Heart left ventricle (tissue), 16 donors: ENCODE measurements at regions of chr7 and their contacts with region 1.

Region 1: GRCh38 chr7:144854839-144855424 is 19.1 kb upstream of the TPK1 start:
- DNase-seq: no peak
- ATAC-seq: no peak
- H3K4me3 ChIP-seq: no peak overlapping the region
- H3K27ac ChIP-seq: no peak overlapping the region
- H3K4me1 ChIP-seq: no peaks in the 10 kb centered on the region
- H3K27me3 ChIP-seq: peaks cover 0 to 10% (median 0%) of the 10 kb centered on the region in 9 donors
- CTCF ChIP-seq: peak; percentile 37 to 67 (median 48)
- POLR2A ChIP-seq: no peak

Region 2: DNA sequence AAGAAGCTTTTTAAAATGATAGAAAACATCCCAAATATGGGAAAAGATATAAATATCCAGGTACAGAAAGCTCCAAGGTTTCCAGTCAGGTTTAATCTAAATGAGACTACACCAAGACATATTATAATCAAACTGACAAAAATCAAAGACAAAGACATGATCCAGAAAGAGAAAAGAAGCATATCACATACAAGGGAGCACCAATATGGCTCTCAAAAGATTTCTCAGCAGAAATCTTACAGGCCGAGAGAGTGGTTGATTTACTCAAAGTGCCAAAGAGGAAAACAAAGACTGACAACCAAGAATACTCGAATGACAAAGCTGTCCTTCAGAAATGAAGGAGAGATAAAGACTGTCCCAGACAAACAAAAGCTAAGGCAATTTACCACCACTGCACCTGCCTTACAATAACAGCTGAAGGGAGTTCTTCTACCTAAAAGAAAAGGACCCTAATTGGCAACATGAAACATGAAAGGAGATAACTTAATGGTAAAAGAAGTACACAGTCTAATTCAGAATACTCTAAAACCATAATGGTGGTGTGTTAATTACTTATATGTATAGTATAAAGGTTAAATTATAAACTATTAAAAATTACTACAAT is 706.6 kb before region 1 on chr7:
- intact Hi-C with region 1: no loop called
- DNase-seq: no peak
- ATAC-seq: no peak
- H3K4me3 ChIP-seq: no peak overlapping the region
- H3K27ac ChIP-seq: no peak overlapping the region
- H3K4me1 ChIP-seq: no peaks in the 10 kb centered on the region
- H3K27me3 ChIP-seq: no peaks in the 10 kb centered on the region
- CTCF ChIP-seq: no peak
- POLR2A ChIP-seq: no peak

Region 3: GRCh38 chr7:144670218-144670617 is 184.7 kb before region 1 on chr7:
- intact Hi-C with region 1: no loop called
- DNase-seq: no peak
- ATAC-seq: no peak
- H3K4me3 ChIP-seq: no peak overlapping the region
- H3K27ac ChIP-seq: no peak overlapping the region
- H3K4me1 ChIP-seq: peaks cover 0 to 3% (median 0%) of the 10 kb centered on the region in 12 donors
- H3K27me3 ChIP-seq: no peaks in the 10 kb centered on the region
- CTCF ChIP-seq: peak in 4 of 12 donors; percentile 8 to 31 (median 20)
- POLR2A ChIP-seq: no peak

Region 4: GRCh38 chr7:144747936-144748335 is 107.0 kb before region 1 on chr7:
- intact Hi-C with region 1: loop called in 1 of 10 experiments (anchors 10 kb)
- DNase-seq: no peak
- ATAC-seq: no peak
- H3K4me3 ChIP-seq: no peak overlapping the region
- H3K27ac ChIP-seq: no peak overlapping the region
- H3K4me1 ChIP-seq: no peaks in the 10 kb centered on the region
- H3K27me3 ChIP-seq: no peaks in the 10 kb centered on the region
- CTCF ChIP-seq: no peak
- POLR2A ChIP-seq: no peak

Region 5: GRCh38 chr7:146084086-146084485 is 1229.2 kb after region 1 on chr7:
- intact Hi-C with region 1: loop called in 1 of 10 experiments (anchors 10 kb)
- DNase-seq: no peak
- ATAC-seq: no peak
- H3K4me3 ChIP-seq: no peak overlapping the region
- H3K27ac ChIP-seq: no peak overlapping the region
- H3K4me1 ChIP-seq: no peaks in the 10 kb centered on the region
- H3K27me3 ChIP-seq: no peaks in the 10 kb centered on the region
- CTCF ChIP-seq: no peak
- POLR2A ChIP-seq: no peak